Mammary epithelial cell (primary cell): ENCODE measurements at regions of chr3 and their contacts with region 1.

Region 1: GRCh38 chr3:184561061-184561912 is at the start of gene EPHB3:
- DNase-seq: peak; percentile 99
- H3K4me3 ChIP-seq: peak within 1 kb of the TSS; percentile 67 to 92 (median 69)
- H3K27ac ChIP-seq: peak within 1 kb of the TSS; percentile 41
- H3K4me1 ChIP-seq: peaks cover 40% of the 10 kb centered on the region
- H3K27me3 ChIP-seq: no peaks in the 10 kb centered on the region
- CTCF ChIP-seq: peak; percentile 99 to 100
- total RNA-seq, gene EPHB3: 17.6 to 45.2 TPM

Region 2: DNA sequence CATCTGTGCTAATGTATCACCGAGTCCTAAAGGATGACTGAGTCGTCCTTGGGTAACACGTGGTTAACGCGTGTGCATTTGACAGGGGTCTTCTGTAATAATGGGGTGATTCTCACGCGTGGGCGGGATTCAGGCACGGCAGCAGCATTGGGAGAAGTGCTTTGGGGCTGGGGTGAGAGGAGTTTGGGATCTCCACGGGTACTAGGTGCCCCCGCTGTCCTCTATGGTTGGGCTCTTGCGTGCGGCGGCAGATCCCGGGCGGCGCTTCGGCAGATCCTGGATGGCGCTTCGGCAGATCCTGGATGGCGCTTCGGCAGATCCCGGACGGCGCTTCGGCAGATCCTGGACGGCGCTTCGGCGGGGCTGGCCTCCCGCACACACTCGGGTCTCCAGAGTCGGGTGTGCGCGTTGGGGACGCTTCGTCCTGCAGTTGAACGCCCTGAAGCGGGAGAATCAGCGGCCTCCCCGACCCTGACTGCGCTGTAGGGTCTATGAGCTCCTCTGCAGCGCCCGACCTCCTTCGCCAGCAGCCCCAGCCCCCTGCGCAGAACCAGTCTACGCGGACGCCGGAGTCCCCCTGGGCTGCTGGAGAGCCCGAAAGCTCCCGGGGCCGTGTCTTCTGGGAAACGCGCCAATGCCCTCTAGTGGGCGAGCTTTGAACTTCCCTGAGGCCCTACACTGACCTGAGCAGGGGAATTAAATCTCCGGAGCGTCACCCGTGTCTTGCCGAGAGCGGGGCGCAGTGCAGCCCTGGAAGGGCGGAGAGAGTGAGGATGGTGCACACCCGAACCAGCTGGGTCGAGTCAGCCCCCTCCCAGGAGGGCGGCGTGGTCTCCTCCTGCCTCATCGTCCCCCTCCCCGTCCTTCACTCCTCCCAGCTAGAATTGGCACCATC is 47.8 kb before region 1 on chr3:
- CTCF ChIA-PET with region 1: no interaction called
- dilution Hi-C with region 1: no loop called
- in situ Hi-C with region 1: no loop called
- intact Hi-C with region 1: no loop called
- DNase-seq: peak; percentile 63
- H3K4me3 ChIP-seq: peak overlapping the region; percentile 41 to 62 (median 54)
- H3K27ac ChIP-seq: no peak overlapping the region
- H3K4me1 ChIP-seq: peaks cover 6% of the 10 kb centered on the region
- H3K27me3 ChIP-seq: peaks cover 3% of the 10 kb centered on the region
- CTCF ChIP-seq: peak; percentile 63 to 85

Region 3: GRCh38 chr3:184711493-184712247 is 150.4 kb after region 1 on chr3 and contains the start of gene MAGEF1:
- CTCF ChIA-PET with region 1: interaction called, 7 read pairs
- dilution Hi-C with region 1: no loop called
- in situ Hi-C with region 1: no loop called
- intact Hi-C with region 1: loop called (anchors 1 kb)
- DNase-seq: peak; percentile 77
- H3K4me3 ChIP-seq: peak within 1 kb of the TSS; percentile 74 to 90 (median 83)
- H3K27ac ChIP-seq: peak within 1 kb of the TSS; percentile 80
- H3K4me1 ChIP-seq: peaks cover 16% of the 10 kb centered on the region
- H3K27me3 ChIP-seq: no peaks in the 10 kb centered on the region
- CTCF ChIP-seq: no peak
- total RNA-seq, gene MAGEF1: 19.0 to 27.8 TPM

Region 4: DNA sequence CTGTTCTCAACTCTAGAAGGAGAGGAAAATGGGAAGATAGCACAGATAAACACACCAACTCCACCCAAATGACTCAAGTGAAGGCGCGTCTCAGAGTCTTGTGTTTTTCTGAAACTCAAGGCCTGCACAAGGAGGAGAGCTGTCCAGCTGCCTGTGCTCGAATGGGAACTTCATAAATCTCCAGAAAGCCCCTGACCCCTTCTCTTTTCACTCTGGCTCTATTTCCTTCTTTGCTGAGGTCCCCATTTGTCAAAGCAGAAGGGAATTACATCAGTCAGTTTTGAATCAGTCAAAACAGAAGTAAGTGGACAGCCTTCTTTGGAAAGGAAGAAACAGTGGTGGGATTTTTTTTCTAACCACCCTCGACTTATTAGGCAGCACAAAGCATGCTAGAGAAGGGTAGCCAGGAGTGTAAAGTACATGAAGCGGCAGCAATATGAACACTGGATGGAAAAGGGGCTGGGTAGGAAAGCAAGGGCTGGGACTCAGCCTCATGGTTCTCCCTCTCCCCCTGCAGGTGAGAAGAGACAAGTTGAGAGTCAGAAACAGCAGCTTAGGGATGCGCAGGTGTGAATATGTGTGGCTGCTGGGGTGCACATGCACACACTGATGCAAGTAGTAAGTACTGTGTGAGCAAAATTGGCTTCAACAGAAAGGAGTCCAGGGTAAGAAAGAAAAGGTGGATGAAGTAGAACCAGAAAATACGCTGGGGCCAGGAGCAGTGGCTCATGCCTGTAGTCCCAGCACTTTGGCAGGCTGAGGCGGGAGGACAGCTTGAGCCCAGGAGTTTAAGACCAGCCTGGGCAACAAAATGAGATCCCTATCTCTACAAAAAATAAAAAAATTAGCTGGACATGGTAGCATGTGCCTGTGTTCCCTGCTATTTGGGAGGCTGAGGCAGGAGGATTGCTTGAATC is 187.2 kb after region 1 on chr3:
- CTCF ChIA-PET with region 1: interaction called, 6 read pairs
- dilution Hi-C with region 1: no loop called
- in situ Hi-C with region 1: no loop called
- intact Hi-C with region 1: loop called (anchors 1 kb)
- DNase-seq: peak; percentile 83
- H3K4me3 ChIP-seq: no peak overlapping the region
- H3K27ac ChIP-seq: peak overlapping the region; percentile 54
- H3K4me1 ChIP-seq: peaks cover 8% of the 10 kb centered on the region
- H3K27me3 ChIP-seq: no peaks in the 10 kb centered on the region
- CTCF ChIP-seq: peak; percentile 74 to 93

Region 5: DNA sequence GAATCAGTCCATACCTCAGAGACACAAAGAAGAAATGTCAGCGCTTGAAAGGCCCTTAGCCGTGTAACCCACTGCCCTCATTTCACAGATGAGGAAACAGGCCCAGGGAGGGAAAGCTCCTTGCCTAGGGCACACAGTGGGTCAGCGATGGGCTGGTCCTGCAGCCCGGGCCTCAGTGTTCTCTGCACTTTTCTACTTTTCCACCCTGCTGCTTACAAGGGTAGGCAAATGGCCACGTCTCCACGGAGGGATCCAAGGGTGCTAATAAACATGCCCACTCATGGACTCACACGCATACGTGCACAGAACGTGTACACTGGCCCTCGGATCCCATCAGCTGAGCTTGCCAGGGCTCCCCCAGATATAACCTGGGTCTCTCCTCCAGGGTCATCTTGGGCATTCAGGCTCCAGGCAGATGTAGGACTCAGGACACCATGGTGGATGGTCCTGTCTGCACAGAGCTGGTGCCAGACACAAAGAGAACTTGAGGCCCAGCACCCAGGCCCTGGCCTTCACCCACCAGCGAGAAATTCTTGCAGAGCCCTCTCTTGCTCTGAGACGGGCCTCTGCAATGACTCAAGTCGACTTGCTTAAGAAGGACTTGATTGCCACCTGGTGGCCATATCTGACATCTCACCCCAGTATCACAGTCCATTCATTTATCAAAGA is 216.2 kb after region 1 on chr3:
- CTCF ChIA-PET with region 1: interaction called, 21 read pairs
- dilution Hi-C with region 1: no loop called
- in situ Hi-C with region 1: no loop called
- intact Hi-C with region 1: loop called (anchors 1 kb)
- DNase-seq: peak; percentile 80
- H3K4me3 ChIP-seq: no peak overlapping the region
- H3K27ac ChIP-seq: no peak overlapping the region
- H3K4me1 ChIP-seq: peaks cover 18% of the 10 kb centered on the region
- H3K27me3 ChIP-seq: no peaks in the 10 kb centered on the region
- CTCF ChIP-seq: peak; percentile 74

Region 6: DNA sequence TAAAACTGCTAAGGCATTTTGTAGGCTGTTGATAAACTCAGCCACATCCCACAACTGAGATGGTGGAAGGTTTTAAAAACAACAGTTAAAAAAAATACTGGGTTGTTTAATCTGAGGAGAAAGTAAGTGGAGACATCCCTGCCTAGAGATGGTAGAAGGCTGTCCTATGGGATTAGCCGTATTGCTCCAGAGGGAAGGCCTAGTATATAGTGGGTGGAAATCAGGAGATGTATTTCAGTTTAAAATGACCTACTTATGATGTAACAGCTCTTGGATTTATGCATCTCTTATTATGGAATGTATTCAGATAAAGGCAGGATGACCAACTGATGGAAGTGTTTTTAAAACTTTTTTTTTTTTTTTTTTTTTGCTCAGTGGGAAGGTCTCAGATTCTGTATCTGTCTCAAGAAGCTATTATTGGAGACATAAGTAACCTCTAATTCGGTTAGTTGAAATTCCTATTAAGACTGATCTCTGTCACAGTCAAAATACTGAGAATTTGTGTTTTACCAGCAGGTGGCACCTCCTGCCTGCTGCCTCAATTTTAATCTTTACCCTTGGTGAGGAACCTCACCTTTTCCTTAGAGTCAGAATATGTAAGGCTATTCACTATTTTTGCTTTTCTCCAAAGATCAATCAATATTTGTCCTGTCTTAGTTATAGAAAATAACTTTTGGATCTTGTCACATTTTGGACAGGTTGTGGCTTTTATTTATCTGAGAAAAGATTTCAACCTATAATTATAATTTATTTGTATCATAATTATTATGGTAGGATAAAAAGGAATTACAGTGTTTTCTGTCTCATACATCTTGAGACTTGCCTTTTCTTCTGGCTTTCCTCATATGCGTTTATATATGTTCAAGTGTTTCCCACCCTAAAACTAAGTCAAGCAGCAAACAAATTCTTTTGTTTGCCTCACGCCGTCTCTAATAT is 313.7 kb after region 1 on chr3:
- CTCF ChIA-PET with region 1: interaction called, 15 read pairs
- dilution Hi-C with region 1: no loop called
- in situ Hi-C with region 1: no loop called
- intact Hi-C with region 1: no loop called
- DNase-seq: peak; percentile 4
- H3K4me3 ChIP-seq: no peak overlapping the region
- H3K27ac ChIP-seq: no peak overlapping the region
- H3K4me1 ChIP-seq: no peaks in the 10 kb centered on the region
- H3K27me3 ChIP-seq: no peaks in the 10 kb centered on the region
- CTCF ChIP-seq: peak; percentile 43 to 74